CD14-positive monocyte (primary cell): ENCODE measurements at regions of chr3 and their contacts with region 1.

Region 1: GRCh38 chr3:48685602-48686511 is at the start of gene NCKIPSD:
- DNase-seq: peak; percentile 81 to 84 (median 83)
- H3K4me3 ChIP-seq: peak within 1 kb of the TSS; percentile 56 to 97 (median 89)
- H3K4me3 Mint-ChIP-seq: peak within 1 kb of the TSS; percentile 91 to 96
- H3K27ac ChIP-seq: peak within 1 kb of the TSS in 1 of 2 donors; percentile 87
- H3K27ac Mint-ChIP-seq: peak within 1 kb of the TSS; percentile 43 to 88 (median 77)
- H3K4me1 ChIP-seq: peaks cover 18 to 25% of the 10 kb centered on the region in 2 donors
- H3K4me1 Mint-ChIP-seq: peaks cover 34% of the 10 kb centered on the region
- H3K27me3 ChIP-seq: no peaks in the 10 kb centered on the region
- H3K27me3 Mint-ChIP-seq: peaks cover 0 to 6% (median 3%) of the 10 kb centered on the region in 3 donors
- CTCF ChIP-seq: peak; percentile 92
- polyA plus RNA-seq, gene NCKIPSD: 4.2 to 14.8 (median 4.3) TPM

Region 2: GRCh38 chr3:48273594-48274211 is 412.2 kb before region 1 on chr3:
- intact Hi-C with region 1: loop called (anchors 10 kb)
- DNase-seq: peak; percentile 45 to 67 (median 62)
- H3K4me3 ChIP-seq: no peak overlapping the region
- H3K4me3 Mint-ChIP-seq: no peak overlapping the region
- H3K27ac ChIP-seq: no peak overlapping the region
- H3K27ac Mint-ChIP-seq: no peak overlapping the region
- H3K4me1 ChIP-seq: no peaks in the 10 kb centered on the region
- H3K4me1 Mint-ChIP-seq: peaks cover 11% of the 10 kb centered on the region
- H3K27me3 ChIP-seq: no peaks in the 10 kb centered on the region
- H3K27me3 Mint-ChIP-seq: peaks cover 0 to 4% (median 1%) of the 10 kb centered on the region in 3 donors
- CTCF ChIP-seq: peak; percentile 82

Region 3: GRCh38 chr3:48400824-48401433 is 284.9 kb before region 1 on chr3:
- intact Hi-C with region 1: loop called (anchors 5 kb)
- DNase-seq: peak; percentile 53 to 73 (median 65)
- H3K4me3 ChIP-seq: no peak overlapping the region
- H3K4me3 Mint-ChIP-seq: no peak overlapping the region
- H3K27ac ChIP-seq: no peak overlapping the region
- H3K27ac Mint-ChIP-seq: no peak overlapping the region
- H3K4me1 ChIP-seq: peaks cover 11 to 14% of the 10 kb centered on the region in 2 donors
- H3K4me1 Mint-ChIP-seq: peaks cover 18% of the 10 kb centered on the region
- H3K27me3 ChIP-seq: no peaks in the 10 kb centered on the region
- H3K27me3 Mint-ChIP-seq: peaks cover 0 to 4% (median 0%) of the 10 kb centered on the region in 3 donors
- CTCF ChIP-seq: peak; percentile 82

Region 4: GRCh38 chr3:48465531-48466378 is 220.1 kb before region 1 on chr3:
- intact Hi-C with region 1: loop called in 1 of 2 experiments (anchors 10 kb)
- DNase-seq: peak; percentile 100
- H3K4me3 ChIP-seq: peak overlapping the region; percentile 55 to 91 (median 74)
- H3K4me3 Mint-ChIP-seq: peak overlapping the region; percentile 86 to 94
- H3K27ac ChIP-seq: peak overlapping the region; percentile 97 to 100
- H3K27ac Mint-ChIP-seq: peak overlapping the region; percentile 100
- H3K4me1 ChIP-seq: peaks cover 51% of the 10 kb centered on the region in 2 donors
- H3K4me1 Mint-ChIP-seq: peaks cover 47% of the 10 kb centered on the region
- H3K27me3 ChIP-seq: no peaks in the 10 kb centered on the region
- H3K27me3 Mint-ChIP-seq: peaks cover 0 to 2% (median 0%) of the 10 kb centered on the region in 3 donors
- CTCF ChIP-seq: no peak

Region 5: GRCh38 chr3:48556793-48557626 is 128.8 kb before region 1 on chr3 and contains the start of gene PFKFB4:
- intact Hi-C with region 1: loop called in 1 of 2 experiments (anchors 10 kb)
- DNase-seq: peak; percentile 99 to 100 (median 99)
- H3K4me3 ChIP-seq: peak within 1 kb of the TSS; percentile 63 to 85 (median 82)
- H3K4me3 Mint-ChIP-seq: peak within 1 kb of the TSS; percentile 82 to 93
- H3K27ac ChIP-seq: peak within 1 kb of the TSS; percentile 96 to 97
- H3K27ac Mint-ChIP-seq: peak within 1 kb of the TSS; percentile 95 to 99 (median 98)
- H3K4me1 ChIP-seq: peaks cover 95 to 98% of the 10 kb centered on the region in 2 donors
- H3K4me1 Mint-ChIP-seq: peaks cover 87% of the 10 kb centered on the region
- H3K27me3 ChIP-seq: no peaks in the 10 kb centered on the region
- H3K27me3 Mint-ChIP-seq: peaks cover 0 to 5% (median 0%) of the 10 kb centered on the region in 3 donors
- CTCF ChIP-seq: no peak
- polyA plus RNA-seq, gene PFKFB4: 32.2 to 44.9 (median 34.9) TPM